Endothelial cell of umbilical vein (primary cell): ENCODE measurements at regions of chr12 and their contacts with region 1.

Region 1: GRCh38 chr12:107448198-107448597 is 237.4 kb upstream of the PWP1 start:
- DNase-seq: no peak
- H3K4me3 ChIP-seq: no peak overlapping the region
- H3K27ac ChIP-seq: no peak overlapping the region
- H3K4me1 ChIP-seq: no peaks in the 10 kb centered on the region
- H3K27me3 ChIP-seq: no peaks in the 10 kb centered on the region
- CTCF ChIP-seq: peak; percentile 16 to 41
- POLR2A ChIP-seq: no peak

Region 2: GRCh38 chr12:106945261-106945851 is 502.8 kb before region 1 on chr12:
- CTCF ChIA-PET with region 1: no interaction called
- POLR2A ChIA-PET with region 1: interaction called, 12 read pairs
- dilution Hi-C with region 1: no loop called
- intact Hi-C with region 1: no loop called
- DNase-seq: no peak
- H3K4me3 ChIP-seq: no peak overlapping the region
- H3K27ac ChIP-seq: no peak overlapping the region
- H3K4me1 ChIP-seq: no peaks in the 10 kb centered on the region
- H3K27me3 ChIP-seq: peaks cover 5 to 6% of the 10 kb centered on the region in 2 experiments
- CTCF ChIP-seq: no peak
- POLR2A ChIP-seq: no peak

Region 3: GRCh38 chr12:107356266-107356936 is 91.8 kb before region 1 on chr12:
- CTCF ChIA-PET with region 1: no interaction called
- POLR2A ChIA-PET with region 1: no interaction called
- dilution Hi-C with region 1: no loop called
- intact Hi-C with region 1: no loop called
- DNase-seq: no peak
- H3K4me3 ChIP-seq: no peak overlapping the region
- H3K27ac ChIP-seq: no peak overlapping the region
- H3K4me1 ChIP-seq: peaks cover 2% of the 10 kb centered on the region
- H3K27me3 ChIP-seq: no peaks in the 10 kb centered on the region
- CTCF ChIP-seq: no peak
- POLR2A ChIP-seq: no peak